ENCODE measurements at regions of chr13 and their contacts with region 1.

Region 1: DNA sequence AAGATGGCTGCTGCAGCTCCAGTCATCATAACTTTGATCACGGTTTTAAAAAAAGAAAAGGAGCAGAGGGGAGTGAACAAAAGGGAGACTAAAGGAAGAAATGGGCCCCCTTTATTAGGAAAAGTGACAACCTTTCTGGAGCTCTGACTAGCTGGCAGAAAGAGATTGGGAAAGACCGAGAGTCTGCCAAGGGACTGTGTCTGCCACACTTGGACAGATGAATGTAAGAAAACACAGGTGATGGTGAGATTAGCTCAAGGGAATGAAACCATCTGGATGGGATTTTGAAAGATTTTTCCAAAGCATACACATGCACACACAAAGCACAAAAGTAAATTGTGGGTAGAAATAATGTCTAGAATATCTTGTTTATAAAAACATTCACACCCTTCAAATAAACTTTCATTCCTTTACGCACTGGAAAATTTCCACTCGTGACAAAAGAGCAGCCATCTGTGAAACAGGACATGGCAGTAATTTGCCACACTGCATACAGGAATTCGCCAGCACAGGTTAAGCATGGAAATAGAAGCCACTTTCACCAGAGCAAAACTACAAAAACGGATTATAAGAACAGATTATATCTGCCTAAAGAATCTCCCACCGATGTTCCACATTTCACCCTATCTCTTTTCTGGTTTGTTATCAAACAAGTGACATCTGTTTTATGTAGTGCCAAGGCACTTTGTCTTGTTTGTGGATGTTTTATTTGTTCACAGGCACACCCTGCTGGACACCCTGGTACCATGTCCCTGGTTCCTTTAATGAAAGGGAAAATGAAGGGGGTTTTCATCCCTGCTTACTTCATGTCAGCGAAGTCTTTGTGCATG is 819.5 kb downstream of the DIAPH3 start:
- DNase-seq: no peak
- H3K4me3 ChIP-seq: no peak overlapping the region
- H3K27ac ChIP-seq: no peak overlapping the region
- H3K4me1 ChIP-seq: peaks cover 12% of the 10 kb centered on the region
- H3K27me3 ChIP-seq: no peaks in the 10 kb centered on the region
- CTCF ChIP-seq: no peak
- POLR2A ChIP-seq: no peak

Region 2: GRCh38 chr13:59356607-59357006 is 12.4 kb after region 1 on chr13:
- CTCF ChIA-PET with region 1: interaction called, 7 read pairs
- POLR2A ChIA-PET with region 1: interaction called, 5 read pairs
- dilution Hi-C with region 1: no loop called
- intact Hi-C with region 1: loop called (anchors 1 kb)
- DNase-seq: peak; percentile 97
- H3K4me3 ChIP-seq: no peak overlapping the region
- H3K27ac ChIP-seq: peak overlapping the region; percentile 22
- H3K4me1 ChIP-seq: peaks cover 26% of the 10 kb centered on the region
- H3K27me3 ChIP-seq: peaks cover 0 to 1% of the 10 kb centered on the region in 2 experiments
- CTCF ChIP-seq: no peak
- POLR2A ChIP-seq: peak; percentile 42

Measured in endothelial cell of umbilical vein (primary cell).